Caco-2 (cell line): ENCODE measurements at regions of chr2 and their contacts with region 1.

Region 1: GRCh38 chr2:55345064-55345463 is 74.6 kb downstream of the CCDC88A start:
- DNase-seq: no peak
- H3K4me3 ChIP-seq: no peak overlapping the region
- H3K4me3 Mint-ChIP-seq: no peak overlapping the region
- H3K27ac Mint-ChIP-seq: no peak overlapping the region
- H3K4me1 ChIP-seq: no peaks in the 10 kb centered on the region
- H3K4me1 Mint-ChIP-seq: no peaks in the 10 kb centered on the region
- H3K27me3 ChIP-seq: no peaks in the 10 kb centered on the region
- H3K27me3 Mint-ChIP-seq: no peaks in the 10 kb centered on the region
- CTCF ChIP-seq: no peak

Region 2: DNA sequence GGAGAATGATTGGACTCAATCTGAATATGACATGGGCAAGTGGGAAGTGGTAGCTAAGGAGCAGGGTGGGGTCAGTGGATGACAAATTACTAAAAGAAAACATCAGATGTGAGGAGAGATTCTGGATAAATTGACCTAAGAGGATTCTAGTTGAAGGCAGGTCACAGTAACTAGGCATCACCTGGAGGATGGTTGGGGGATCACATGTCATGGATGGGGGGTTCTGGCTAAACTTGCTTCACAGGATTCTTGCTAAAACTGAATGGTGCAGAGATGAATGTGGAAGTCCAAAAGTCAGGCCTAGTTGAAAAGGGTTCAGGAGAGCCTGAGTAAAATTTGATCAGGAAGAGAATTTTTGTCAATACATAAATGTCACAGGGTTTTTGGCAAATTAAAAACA is 131.2 kb before region 1 on chr2:
- CTCF ChIA-PET with region 1: no interaction called
- POLR2A ChIA-PET with region 1: no interaction called
- intact Hi-C with region 1: no loop called
- DNase-seq: no peak
- H3K4me3 ChIP-seq: no peak overlapping the region
- H3K4me3 Mint-ChIP-seq: no peak overlapping the region
- H3K27ac Mint-ChIP-seq: no peak overlapping the region
- H3K4me1 ChIP-seq: no peaks in the 10 kb centered on the region
- H3K4me1 Mint-ChIP-seq: peaks cover 7% of the 10 kb centered on the region
- H3K27me3 ChIP-seq: no peaks in the 10 kb centered on the region
- H3K27me3 Mint-ChIP-seq: no peaks in the 10 kb centered on the region
- CTCF ChIP-seq: no peak

Region 3: DNA sequence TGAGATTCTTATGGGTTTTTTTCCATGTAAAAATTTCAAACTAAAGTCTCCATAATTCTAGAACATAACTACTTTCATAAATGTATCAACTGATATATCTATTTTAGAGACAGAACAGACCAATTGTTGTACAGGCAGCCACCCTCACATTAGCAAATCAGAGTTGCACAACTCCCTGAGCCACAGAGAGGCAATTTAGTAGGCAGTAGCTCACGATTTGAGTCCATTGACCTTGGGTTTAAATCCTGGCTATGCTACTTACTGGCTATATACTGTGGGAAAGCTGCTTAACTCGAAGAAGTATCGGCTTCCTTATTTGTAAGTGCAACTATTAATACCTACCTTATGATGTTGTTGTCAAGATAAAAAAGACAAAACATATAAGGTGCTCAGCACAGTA is 92.2 kb before region 1 on chr2:
- CTCF ChIA-PET with region 1: no interaction called
- POLR2A ChIA-PET with region 1: no interaction called
- intact Hi-C with region 1: no loop called
- DNase-seq: no peak
- H3K4me3 ChIP-seq: no peak overlapping the region
- H3K4me3 Mint-ChIP-seq: no peak overlapping the region
- H3K27ac Mint-ChIP-seq: no peak overlapping the region
- H3K4me1 ChIP-seq: no peaks in the 10 kb centered on the region
- H3K4me1 Mint-ChIP-seq: peaks cover 2% of the 10 kb centered on the region
- H3K27me3 ChIP-seq: no peaks in the 10 kb centered on the region
- H3K27me3 Mint-ChIP-seq: no peaks in the 10 kb centered on the region
- CTCF ChIP-seq: no peak

Region 4: GRCh38 chr2:55309446-55309845 is 35.6 kb before region 1 on chr2:
- CTCF ChIA-PET with region 1: no interaction called
- POLR2A ChIA-PET with region 1: no interaction called
- intact Hi-C with region 1: loop called (anchors 5 kb)
- DNase-seq: no peak
- H3K4me3 ChIP-seq: no peak overlapping the region
- H3K4me3 Mint-ChIP-seq: no peak overlapping the region
- H3K27ac Mint-ChIP-seq: no peak overlapping the region
- H3K4me1 ChIP-seq: no peaks in the 10 kb centered on the region
- H3K4me1 Mint-ChIP-seq: no peaks in the 10 kb centered on the region
- H3K27me3 ChIP-seq: no peaks in the 10 kb centered on the region
- H3K27me3 Mint-ChIP-seq: no peaks in the 10 kb centered on the region
- CTCF ChIP-seq: no peak

Region 5: DNA sequence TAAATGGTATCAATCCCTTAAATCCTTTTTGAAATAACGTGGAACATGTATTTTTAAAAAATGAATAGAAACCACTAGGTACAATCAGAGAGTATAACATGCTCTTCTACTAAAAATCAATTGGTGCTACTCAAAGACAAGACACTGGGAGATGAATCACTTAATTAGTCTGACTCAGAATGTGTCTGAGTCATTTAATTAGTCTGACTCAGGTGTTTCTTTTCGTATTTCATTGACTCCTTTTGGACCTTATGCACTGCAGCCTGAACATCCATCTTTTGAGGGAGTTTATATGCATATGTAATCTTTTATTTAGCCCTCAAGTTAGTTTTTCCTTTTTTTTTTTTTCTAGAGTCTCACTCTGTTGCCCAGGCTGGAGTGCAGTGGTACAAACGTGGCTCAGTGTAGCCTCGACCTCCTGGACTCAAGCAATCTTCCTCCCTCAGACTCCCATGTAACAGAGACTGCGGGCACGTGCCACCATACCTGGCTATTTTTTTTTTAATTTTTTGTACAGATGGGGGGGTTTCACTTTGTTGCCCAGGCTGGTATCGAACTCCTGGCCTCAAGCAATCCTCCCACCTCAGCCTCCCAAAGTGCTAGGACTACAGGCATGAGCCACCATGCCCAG is 245.9 kb after region 1 on chr2:
- CTCF ChIA-PET with region 1: no interaction called
- POLR2A ChIA-PET with region 1: no interaction called
- intact Hi-C with region 1: no loop called
- DNase-seq: no peak
- H3K4me3 ChIP-seq: no peak overlapping the region
- H3K4me3 Mint-ChIP-seq: no peak overlapping the region
- H3K27ac Mint-ChIP-seq: no peak overlapping the region
- H3K4me1 ChIP-seq: no peaks in the 10 kb centered on the region
- H3K4me1 Mint-ChIP-seq: no peaks in the 10 kb centered on the region
- H3K27me3 ChIP-seq: no peaks in the 10 kb centered on the region
- H3K27me3 Mint-ChIP-seq: no peaks in the 10 kb centered on the region
- CTCF ChIP-seq: no peak